Sigmoid colon (tissue), 7 donors: ENCODE measurements at regions of chr7 and their contacts with region 1.

Region 1: DNA sequence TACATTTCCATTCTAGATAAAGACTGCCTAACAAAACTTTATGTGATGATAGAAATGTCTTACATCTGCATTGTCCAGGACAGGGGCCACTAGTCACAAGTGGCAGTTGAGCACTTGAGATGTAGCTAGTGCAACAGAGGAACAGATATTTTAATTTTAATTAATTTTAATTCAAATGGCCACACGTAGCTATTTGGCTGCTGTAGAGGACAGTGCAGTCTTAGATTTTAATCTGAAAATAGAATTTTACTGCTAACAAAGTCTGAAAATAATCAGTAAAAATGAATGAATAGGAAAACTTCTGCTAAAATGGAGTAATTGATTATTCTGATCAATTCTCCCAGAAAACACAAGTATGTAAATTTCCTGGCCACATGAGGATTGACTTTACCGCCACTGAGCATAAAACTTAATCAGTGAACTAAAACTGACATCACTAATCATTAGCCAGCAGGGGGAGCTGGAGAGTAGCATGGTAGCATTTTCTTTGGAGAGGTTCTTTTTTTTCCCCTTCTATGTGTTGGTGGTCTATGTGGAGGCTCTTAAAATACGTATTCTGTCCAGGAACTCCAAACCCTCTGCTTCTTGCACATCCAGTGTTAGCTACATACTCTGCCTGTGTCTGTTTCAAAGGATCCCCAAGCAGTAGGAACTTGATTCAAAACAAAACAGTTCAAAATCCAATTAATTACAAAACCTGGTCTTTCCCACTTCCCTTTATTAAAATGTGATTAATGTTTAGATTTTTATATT is 52.1 kb downstream of the TSPAN12 start:
- DNase-seq: no peak
- H3K4me3 ChIP-seq: no peak overlapping the region
- H3K27ac ChIP-seq: no peak overlapping the region
- H3K4me1 ChIP-seq: peaks cover 0 to 8% (median 3%) of the 10 kb centered on the region in 4 donors
- H3K27me3 ChIP-seq: no peaks in the 10 kb centered on the region
- CTCF ChIP-seq: peak; percentile 68 to 88 (median 73)
- EP300 ChIP-seq: no peak
- POLR2A ChIP-seq: no peak

Region 2: GRCh38 chr7:120857588-120858573 is 52.1 kb after region 1 on chr7 and contains the start of gene TSPAN12:
- intact Hi-C with region 1: loop called (anchors 2 kb)
- DNase-seq: peak; percentile 89
- H3K4me3 ChIP-seq: peak within 1 kb of the TSS; percentile 57 to 80 (median 73)
- H3K27ac ChIP-seq: peak within 1 kb of the TSS; percentile 81 to 93 (median 90)
- H3K4me1 ChIP-seq: peaks cover 0 to 23% (median 9%) of the 10 kb centered on the region in 4 donors
- H3K27me3 ChIP-seq: no peaks in the 10 kb centered on the region
- CTCF ChIP-seq: peak; percentile 37 to 80 (median 50)
- EP300 ChIP-seq: no peak
- POLR2A ChIP-seq: no peak
- total RNA-seq, gene TSPAN12: 19.9 to 47.7 (median 32.8) TPM

Region 3: DNA sequence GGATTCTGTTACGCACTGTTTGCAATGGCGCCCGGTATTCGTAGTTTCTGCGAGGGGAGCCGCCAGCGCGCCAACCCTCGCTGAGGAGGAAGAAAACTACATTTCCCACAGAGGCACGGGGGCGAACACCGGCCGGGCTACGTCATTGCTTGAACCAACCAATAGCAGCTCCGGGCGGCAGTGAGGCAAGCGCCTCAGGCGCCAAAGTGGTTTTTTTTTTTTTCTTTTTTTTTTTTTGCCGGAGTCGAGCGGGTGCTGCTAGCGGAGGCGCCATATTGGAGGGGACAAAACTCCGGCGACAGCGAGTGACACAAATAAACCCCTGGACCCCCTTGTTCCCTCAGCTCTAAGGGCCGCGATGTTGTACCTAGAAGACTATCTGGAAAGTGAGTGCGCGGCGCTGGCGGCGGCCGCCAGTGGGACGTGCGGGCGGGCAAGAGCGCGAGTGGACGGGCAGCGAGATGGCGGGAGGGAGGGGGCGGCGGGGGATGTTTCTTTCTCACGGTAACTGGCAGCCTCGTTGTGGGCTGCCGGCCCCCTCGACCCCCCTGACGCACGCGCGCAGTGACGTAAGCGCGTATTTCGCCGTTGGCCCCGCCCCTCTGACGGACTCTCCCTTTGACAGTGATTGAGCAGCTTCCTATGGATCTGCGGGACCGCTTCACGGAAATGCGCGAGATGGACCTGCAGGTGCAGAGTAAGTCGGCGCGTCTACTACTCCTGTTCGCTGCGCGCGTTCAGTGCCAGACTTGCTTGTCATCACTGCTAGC is 144.9 kb after region 1 on chr7 and contains the start of gene ING3:
- intact Hi-C with region 1: loop called (anchors 5 kb)
- DNase-seq: peak; percentile 99
- H3K4me3 ChIP-seq: peak within 1 kb of the TSS; percentile 64 to 73 (median 68)
- H3K27ac ChIP-seq: peak within 1 kb of the TSS; percentile 94 to 96 (median 96)
- H3K4me1 ChIP-seq: peaks cover 0 to 34% (median 10%) of the 10 kb centered on the region in 4 donors
- H3K27me3 ChIP-seq: no peaks in the 10 kb centered on the region
- CTCF ChIP-seq: no peak
- EP300 ChIP-seq: peak in 1 of 4 donors; percentile 56
- POLR2A ChIP-seq: no peak
- total RNA-seq, gene ING3: 16.6 to 33.1 (median 25.4) TPM

Region 4: DNA sequence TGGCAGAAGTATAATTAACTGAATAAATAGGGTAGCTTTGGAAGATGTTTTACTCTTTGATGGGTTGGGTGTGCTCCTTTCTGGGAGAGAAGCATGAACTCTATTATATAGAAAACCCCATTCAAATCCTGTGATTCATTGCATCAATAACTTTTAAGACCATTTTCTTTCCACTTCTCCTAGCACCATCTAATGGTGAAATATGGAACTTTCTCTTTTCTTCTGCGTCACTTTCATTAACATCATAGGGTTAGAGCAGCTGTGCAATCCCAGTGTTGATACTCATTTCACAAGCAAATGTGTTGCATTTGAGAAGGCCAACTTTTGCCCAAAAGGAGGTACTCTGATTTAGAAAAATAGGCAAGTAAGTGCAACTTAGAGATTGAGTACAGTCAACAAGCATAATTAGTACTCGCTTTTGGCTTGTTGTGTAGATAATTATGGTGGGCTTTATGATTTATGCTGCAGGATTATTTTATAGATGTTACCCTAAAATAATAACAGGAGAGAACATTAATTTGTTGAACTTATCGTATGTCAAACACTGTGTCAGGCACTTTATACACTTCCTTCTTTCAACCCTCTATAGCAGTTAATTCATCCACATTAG is 275.6 kb after region 1 on chr7:
- intact Hi-C with region 1: loop called (anchors 5 kb)
- DNase-seq: no peak
- H3K4me3 ChIP-seq: no peak overlapping the region
- H3K27ac ChIP-seq: peak overlapping the region in 3 of 4 donors; percentile 10 to 79 (median 78)
- H3K4me1 ChIP-seq: peaks cover 0 to 48% (median 39%) of the 10 kb centered on the region in 4 donors
- H3K27me3 ChIP-seq: no peaks in the 10 kb centered on the region
- CTCF ChIP-seq: peak; percentile 64 to 77 (median 75)
- EP300 ChIP-seq: no peak
- POLR2A ChIP-seq: no peak

Region 5: GRCh38 chr7:121107923-121108498 is 302.2 kb after region 1 on chr7:
- intact Hi-C with region 1: loop called (anchors 1 kb)
- DNase-seq: no peak
- H3K4me3 ChIP-seq: no peak overlapping the region
- H3K27ac ChIP-seq: no peak overlapping the region
- H3K4me1 ChIP-seq: peaks cover 0 to 9% (median 0%) of the 10 kb centered on the region in 4 donors
- H3K27me3 ChIP-seq: no peaks in the 10 kb centered on the region
- CTCF ChIP-seq: peak; percentile 63 to 81 (median 70)
- EP300 ChIP-seq: no peak
- POLR2A ChIP-seq: no peak